Pancreas (tissue), 10 donors: ENCODE measurements at regions of chr4 and their contacts with region 1.

Region 1: DNA sequence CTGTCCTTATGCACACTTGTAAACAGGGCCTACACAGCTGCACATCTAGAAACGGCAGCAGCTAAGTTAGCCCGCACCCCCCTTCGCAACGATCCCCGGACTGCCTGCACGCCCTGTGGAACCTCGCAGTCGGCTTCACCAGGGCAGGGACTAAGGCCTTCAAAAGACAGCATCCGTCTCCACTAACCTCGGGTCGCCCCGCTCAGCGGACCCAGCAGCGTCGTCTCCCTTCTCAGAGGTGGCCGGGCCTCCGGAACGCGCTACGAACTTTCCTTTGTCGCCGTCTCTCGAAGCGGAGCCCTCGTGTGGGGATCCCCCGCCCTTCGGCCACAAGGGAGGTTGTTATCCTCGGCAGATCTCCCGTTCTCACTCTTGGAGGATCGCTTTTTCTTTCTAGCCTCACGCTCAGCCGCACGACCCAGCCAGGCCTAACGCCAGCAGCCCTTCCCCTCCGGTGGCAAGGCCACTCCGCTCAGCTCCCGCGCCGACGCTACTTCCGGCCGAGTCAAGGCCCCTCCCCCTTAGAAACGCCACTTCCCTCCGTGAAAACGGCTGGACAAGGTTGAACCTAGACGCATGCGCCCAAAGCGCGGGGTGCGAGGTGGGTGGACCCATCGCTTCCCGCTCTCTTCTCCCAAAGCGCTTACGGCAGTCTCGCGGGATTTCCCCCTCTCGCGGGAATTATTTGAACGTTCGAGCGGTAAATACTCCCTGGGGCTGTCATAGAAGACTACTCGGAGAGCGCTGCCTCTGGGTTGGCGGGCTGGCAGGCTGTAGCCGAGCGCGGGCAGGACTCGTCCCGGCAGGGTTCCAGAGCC is at the starts of genes DCAF16 and NCAPG:
- DNase-seq: peak; percentile 99 to 100 (median 99)
- ATAC-seq: peak; percentile 98 to 100 (median 100)
- H3K4me3 ChIP-seq: peak within 1 kb of the TSS; percentile 64 to 81 (median 78)
- H3K27ac ChIP-seq: peak within 1 kb of the TSS; percentile 89 to 95 (median 94)
- H3K4me1 ChIP-seq: peaks cover 17 to 31% (median 26%) of the 10 kb centered on the region in 3 donors
- H3K27me3 ChIP-seq: no peaks in the 10 kb centered on the region
- CTCF ChIP-seq: no peak
- total RNA-seq, gene DCAF16: 12.4 to 23.5 (median 14.4) TPM
- total RNA-seq, gene NCAPG: 0.23 to 1.3 (median 0.54) TPM in 5 of 6 donors, not detected in the other

Region 2: DNA sequence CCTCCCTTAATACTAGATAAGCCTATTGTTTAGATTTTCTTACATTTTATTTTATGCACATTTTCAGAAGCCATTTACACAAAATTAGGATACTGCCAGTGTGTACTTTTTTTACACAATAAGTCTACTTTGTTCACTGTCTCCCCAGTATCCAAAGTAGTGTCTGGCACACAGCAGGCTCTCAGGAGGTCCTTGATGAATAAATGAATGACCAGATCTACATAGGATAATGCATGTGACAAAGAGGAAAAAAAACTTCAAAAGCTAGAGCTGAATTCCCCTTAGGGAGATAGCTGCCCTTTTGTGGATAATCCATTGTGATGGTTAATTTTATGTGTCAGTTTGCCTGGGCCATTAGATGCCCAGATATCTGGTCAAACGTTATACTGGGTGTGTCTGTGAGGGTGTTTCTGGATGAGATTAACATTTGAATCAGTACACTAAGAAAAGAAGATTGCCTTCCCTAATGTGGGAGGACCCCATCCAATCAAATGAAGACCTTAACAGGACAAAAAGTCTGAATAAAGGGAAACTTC is 360.1 kb before region 1 on chr4:
- intact Hi-C with region 1: no loop called
- DNase-seq: no peak
- ATAC-seq: no peak
- H3K4me3 ChIP-seq: no peak overlapping the region
- H3K27ac ChIP-seq: no peak overlapping the region
- H3K4me1 ChIP-seq: no peaks in the 10 kb centered on the region
- H3K27me3 ChIP-seq: no peaks in the 10 kb centered on the region
- CTCF ChIP-seq: no peak

Region 3: GRCh38 chr4:17552427-17552826 is 258.0 kb before region 1 on chr4:
- intact Hi-C with region 1: loop called in 1 of 3 experiments (anchors 10 kb)
- DNase-seq: peak in 2 of 6 donors; percentile 15 to 42
- ATAC-seq: peak in 3 of 4 donors; percentile 39 to 70 (median 39)
- H3K4me3 ChIP-seq: no peak overlapping the region
- H3K27ac ChIP-seq: no peak overlapping the region
- H3K4me1 ChIP-seq: no peaks in the 10 kb centered on the region
- H3K27me3 ChIP-seq: no peaks in the 10 kb centered on the region
- CTCF ChIP-seq: no peak

Region 4: DNA sequence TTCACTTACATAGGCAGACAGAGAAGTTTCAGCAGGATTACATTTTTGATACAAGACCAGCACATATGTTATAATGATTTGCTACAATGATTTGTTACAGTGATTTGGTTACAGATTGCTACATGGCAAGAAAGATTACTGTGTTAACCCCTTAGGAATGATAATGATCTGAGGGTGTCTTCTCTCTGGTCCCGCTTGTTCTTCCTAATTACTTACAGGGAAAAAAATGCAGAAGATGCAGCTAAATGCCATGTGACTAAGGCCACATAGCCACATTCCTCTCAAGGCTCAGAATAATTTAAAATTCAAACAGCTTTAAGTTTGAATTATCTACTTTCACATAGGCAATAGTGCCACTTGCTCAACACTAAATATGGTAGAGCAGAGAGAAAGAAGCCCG is 243.2 kb before region 1 on chr4:
- intact Hi-C with region 1: no loop called
- DNase-seq: no peak
- ATAC-seq: no peak
- H3K4me3 ChIP-seq: no peak overlapping the region
- H3K27ac ChIP-seq: no peak overlapping the region
- H3K4me1 ChIP-seq: no peaks in the 10 kb centered on the region
- H3K27me3 ChIP-seq: no peaks in the 10 kb centered on the region
- CTCF ChIP-seq: no peak

Region 5: GRCh38 chr4:18593445-18594002 is 783.1 kb after region 1 on chr4:
- intact Hi-C with region 1: loop called in 2 of 3 experiments (anchors 10 kb)
- DNase-seq: peak in 3 of 6 donors; percentile 21 to 61 (median 33)
- ATAC-seq: peak in 3 of 4 donors; percentile 86 to 90 (median 89)
- H3K4me3 ChIP-seq: no peak overlapping the region
- H3K27ac ChIP-seq: no peak overlapping the region
- H3K4me1 ChIP-seq: peaks cover 0 to 3% (median 0%) of the 10 kb centered on the region in 3 donors
- H3K27me3 ChIP-seq: no peaks in the 10 kb centered on the region
- CTCF ChIP-seq: peak; percentile 35 to 85 (median 82)